A549 (cell line): ENCODE measurements at regions of chr15 and their contacts with region 1.

Region 1: GRCh38 chr15:72722071-72722696 is 36.2 kb downstream of the BBS4 start:
- DNase-seq: peak; percentile 57 to 80
- ATAC-seq: peak; percentile 84 to 90; a peak in 5 of 6 replicates
- H3K4me3 ChIP-seq: no peak overlapping the region
- H3K27ac ChIP-seq: no peak overlapping the region
- H3K4me1 ChIP-seq: no peaks in the 10 kb centered on the region
- CTCF ChIP-seq: peak; percentile 94
- EP300 ChIP-seq: no peak
- POLR2A ChIP-seq: no peak
- RAD21 ChIP-seq: peak; percentile 73 to 74

Region 2: GRCh38 chr15:72706266-72706665 is 15.9 kb before region 1 on chr15:
- CTCF ChIA-PET with region 1: interaction called, 14 read pairs
- POLR2A ChIA-PET with region 1: no interaction called
- DNase-seq: peak in 1 of 2 experiments; percentile 9
- ATAC-seq: no peak
- H3K4me3 ChIP-seq: no peak overlapping the region
- H3K27ac ChIP-seq: no peak overlapping the region
- H3K4me1 ChIP-seq: 0 out of 3 replicates have a peak, but pooled peaks cover 3% of the 10 kb centered on the region
- CTCF ChIP-seq: no peak
- EP300 ChIP-seq: no peak
- POLR2A ChIP-seq: no peak
- RAD21 ChIP-seq: no peak

Region 3: GRCh38 chr15:72740219-72740618 is 18.0 kb after region 1 on chr15:
- CTCF ChIA-PET with region 1: interaction called, 71 read pairs
- POLR2A ChIA-PET with region 1: no interaction called
- DNase-seq: no peak
- ATAC-seq: no peak
- H3K4me3 ChIP-seq: no peak overlapping the region
- H3K27ac ChIP-seq: no peak overlapping the region
- H3K4me1 ChIP-seq: no peaks in the 10 kb centered on the region
- CTCF ChIP-seq: no peak
- EP300 ChIP-seq: no peak
- POLR2A ChIP-seq: no peak
- RAD21 ChIP-seq: no peak

Region 4: GRCh38 chr15:72758182-72758581 is 36.0 kb after region 1 on chr15:
- CTCF ChIA-PET with region 1: interaction called, 13 read pairs
- POLR2A ChIA-PET with region 1: no interaction called
- DNase-seq: peak in 1 of 2 experiments; percentile 19
- ATAC-seq: peak in 1 of 2 experiments; percentile 57; a peak in 3 of 6 replicates
- H3K4me3 ChIP-seq: no peak overlapping the region
- H3K27ac ChIP-seq: no peak overlapping the region
- H3K4me1 ChIP-seq: no peaks in the 10 kb centered on the region
- CTCF ChIP-seq: no peak
- EP300 ChIP-seq: no peak
- POLR2A ChIP-seq: no peak
- RAD21 ChIP-seq: no peak

Region 5: GRCh38 chr15:73081321-73081958 is 359.3 kb after region 1 on chr15:
- CTCF ChIA-PET with region 1: interaction called, 10 read pairs
- POLR2A ChIA-PET with region 1: no interaction called
- DNase-seq: peak; percentile 28 to 73
- ATAC-seq: peak; percentile 85 to 87; a peak in 5 of 6 replicates
- H3K4me3 ChIP-seq: no peak overlapping the region
- H3K27ac ChIP-seq: no peak overlapping the region
- H3K4me1 ChIP-seq: peaks cover 10% of the 10 kb centered on the region
- CTCF ChIP-seq: peak; percentile 92
- EP300 ChIP-seq: no peak
- POLR2A ChIP-seq: no peak
- RAD21 ChIP-seq: peak; percentile 91 to 93